ENCODE measurements at regions of chr11 and their contacts with region 1.

Region 1: DNA sequence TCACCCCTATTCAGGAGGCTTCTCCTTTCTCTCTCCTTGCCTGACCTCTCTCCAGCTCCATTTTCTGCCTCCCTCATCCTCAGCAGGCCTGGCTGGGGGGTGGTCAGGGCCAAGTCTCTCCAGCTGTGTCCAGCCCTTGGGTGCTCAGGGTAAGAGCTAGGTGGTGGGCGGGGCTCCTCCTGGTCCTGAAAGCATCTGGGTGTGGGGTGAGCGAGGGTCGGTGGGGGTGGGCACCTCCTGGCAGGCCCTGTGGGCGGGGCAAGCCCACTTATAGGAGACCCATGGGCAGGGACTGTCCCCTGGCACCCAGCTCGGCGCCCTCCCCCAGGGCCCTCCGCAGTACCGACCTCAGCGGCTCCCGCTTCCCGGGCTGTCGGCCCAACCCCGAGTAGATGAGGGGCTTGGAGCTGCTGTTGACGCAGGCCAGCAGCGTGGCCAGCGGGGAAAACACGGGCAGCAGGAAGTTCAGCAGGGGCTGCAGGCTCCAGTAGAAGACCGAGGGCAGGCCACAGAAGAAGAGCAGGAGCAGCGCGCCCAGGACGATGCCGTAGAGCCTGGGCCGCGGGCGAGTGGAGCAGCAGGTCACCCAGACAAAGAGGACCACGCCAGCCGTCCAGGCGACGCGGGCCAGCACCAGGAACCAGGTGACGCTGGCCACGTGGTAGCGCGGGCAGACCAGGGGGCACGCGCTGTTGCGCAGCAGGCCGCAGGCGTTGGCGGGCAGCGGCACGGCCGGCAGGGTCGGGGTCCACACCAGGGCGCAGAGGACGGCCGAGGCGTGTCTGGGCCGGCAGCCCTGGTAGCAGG is 734 bp downstream of the MRGPRG start:
- DNase-seq: no peak
- H3K4me3 ChIP-seq: no peak overlapping the region
- H3K27ac ChIP-seq: no peak overlapping the region
- H3K4me1 ChIP-seq: peaks cover 5 to 14% (median 11%) of the 10 kb centered on the region in 4 donors
- H3K27me3 ChIP-seq: peaks cover 0 to 91% (median 17%) of the 10 kb centered on the region in 4 donors
- CTCF ChIP-seq: no peak
- EP300 ChIP-seq: no peak
- POLR2A ChIP-seq: no peak

Region 2: GRCh38 chr11:3037040-3037944 is 180.6 kb before region 1 on chr11:
- intact Hi-C with region 1: loop called (anchors 5 kb)
- DNase-seq: peak; percentile 94
- H3K4me3 ChIP-seq: no peak overlapping the region
- H3K27ac ChIP-seq: peak overlapping the region in 2 of 4 donors; percentile 1 to 20
- H3K4me1 ChIP-seq: peaks cover 6 to 16% (median 8%) of the 10 kb centered on the region in 4 donors
- H3K27me3 ChIP-seq: no peaks in the 10 kb centered on the region
- CTCF ChIP-seq: peak; percentile 71 to 80 (median 79)
- EP300 ChIP-seq: no peak
- POLR2A ChIP-seq: no peak

Region 3: GRCh38 chr11:3109921-3110706 is 107.8 kb before region 1 on chr11:
- intact Hi-C with region 1: loop called (anchors 5 kb)
- DNase-seq: no peak
- H3K4me3 ChIP-seq: no peak overlapping the region
- H3K27ac ChIP-seq: no peak overlapping the region
- H3K4me1 ChIP-seq: peaks cover 0 to 14% (median 7%) of the 10 kb centered on the region in 4 donors
- H3K27me3 ChIP-seq: no peaks in the 10 kb centered on the region
- CTCF ChIP-seq: peak; percentile 76 to 81 (median 78)
- EP300 ChIP-seq: no peak
- POLR2A ChIP-seq: no peak

Region 4: DNA sequence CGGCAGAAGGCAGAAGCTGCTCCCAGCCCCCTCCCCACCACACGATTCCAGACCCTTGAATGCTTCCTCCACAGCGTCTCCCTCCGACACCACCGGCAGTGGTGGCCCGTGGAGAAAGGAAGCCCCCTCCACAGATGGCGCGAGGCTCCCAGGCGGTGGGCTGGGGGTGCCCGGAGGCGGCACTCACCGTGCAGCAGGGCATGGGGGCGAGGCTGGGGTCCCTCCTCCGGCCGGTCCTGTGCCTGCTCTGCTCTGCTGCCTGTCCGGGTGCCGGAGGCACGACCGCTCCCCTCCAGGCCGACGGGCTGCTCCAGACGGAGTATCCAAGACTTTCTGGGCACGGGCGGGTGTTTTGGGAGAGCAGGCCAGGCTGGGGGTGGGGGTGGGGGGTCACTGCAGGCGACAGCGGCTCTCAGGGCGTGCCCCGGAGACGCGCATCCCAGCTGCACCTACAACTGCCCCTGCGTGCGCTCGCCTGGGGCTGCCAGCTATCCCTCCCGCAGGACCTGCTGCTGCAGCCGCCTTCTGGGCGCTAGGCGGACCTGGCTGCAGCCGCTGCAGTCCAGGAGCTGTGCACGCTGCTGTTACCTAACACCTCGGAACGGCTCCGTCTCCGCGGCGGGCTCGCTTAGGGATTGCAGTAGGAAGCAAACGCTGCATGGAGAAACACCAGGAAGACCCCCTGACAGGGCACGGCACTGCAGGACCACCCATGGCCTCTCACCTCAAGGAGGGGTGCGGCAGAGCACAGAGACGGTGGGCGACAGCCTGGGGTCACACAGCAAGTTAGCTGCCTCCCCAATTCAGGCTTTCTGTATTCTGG is 14.4 kb before region 1 on chr11:
- intact Hi-C with region 1: no loop called
- DNase-seq: no peak
- H3K4me3 ChIP-seq: peak overlapping the region in 2 of 4 donors; percentile 2 to 22
- H3K27ac ChIP-seq: no peak overlapping the region
- H3K4me1 ChIP-seq: peaks cover 7 to 27% (median 23%) of the 10 kb centered on the region in 4 donors
- H3K27me3 ChIP-seq: peaks cover 0 to 60% (median 14%) of the 10 kb centered on the region in 4 donors
- CTCF ChIP-seq: no peak
- EP300 ChIP-seq: no peak
- POLR2A ChIP-seq: no peak

Region 5: GRCh38 chr11:3341298-3341697 is 123.4 kb after region 1 on chr11:
- intact Hi-C with region 1: no loop called
- DNase-seq: no peak
- H3K4me3 ChIP-seq: no peak overlapping the region
- H3K27ac ChIP-seq: no peak overlapping the region
- H3K4me1 ChIP-seq: no peaks in the 10 kb centered on the region
- H3K27me3 ChIP-seq: peaks cover 0 to 37% (median 2%) of the 10 kb centered on the region in 4 donors
- CTCF ChIP-seq: peak; percentile 46 to 60 (median 52)
- EP300 ChIP-seq: no peak
- POLR2A ChIP-seq: no peak

Measured in esophagus muscularis mucosa (tissue), 4 donors.